AG04449 (cell line): ENCODE measurements at regions of chr3 and their contacts with region 1.

Region 1: DNA sequence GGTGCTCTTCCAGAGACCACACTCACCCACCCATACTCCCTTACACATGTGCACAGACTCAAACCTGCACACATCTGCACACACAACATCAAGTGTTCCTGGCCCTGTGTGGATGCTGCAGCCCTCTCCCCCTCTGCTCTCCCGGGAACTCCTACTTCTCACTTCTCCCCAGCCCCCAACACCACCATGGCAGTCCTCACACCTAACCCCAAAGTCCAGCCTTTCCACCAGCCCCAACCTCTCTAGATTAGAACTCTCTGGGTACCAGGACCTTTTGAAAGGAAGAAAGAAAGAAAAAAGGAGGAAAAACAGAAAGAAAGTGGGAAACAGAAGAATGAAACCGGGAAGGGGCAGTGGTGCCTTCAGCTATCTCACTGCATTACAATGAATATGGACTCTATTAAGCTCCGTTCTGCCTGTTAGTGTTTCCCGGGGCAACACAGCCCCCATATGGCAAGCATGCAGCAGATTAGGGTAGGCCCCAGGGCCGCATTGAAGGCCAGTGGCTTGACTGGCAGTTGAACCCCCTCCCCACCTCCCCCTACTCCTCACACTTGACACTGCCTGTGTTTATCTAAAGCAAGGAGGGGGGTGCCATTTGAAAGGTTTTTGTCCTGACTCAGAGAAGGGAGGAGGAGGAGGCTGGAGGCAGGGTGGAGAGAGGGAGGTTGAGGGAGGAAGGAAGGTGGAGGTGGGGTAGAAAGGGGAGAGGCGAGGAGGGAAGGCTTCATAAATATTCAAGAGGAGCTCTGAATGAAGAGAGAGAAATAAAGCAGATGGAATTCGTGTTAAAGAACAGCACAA is 30.1 kb downstream of the BOC start:
- DNase-seq: no peak
- H3K4me3 ChIP-seq: peak overlapping the region; percentile 46
- CTCF ChIP-seq: no peak

Region 2: DNA sequence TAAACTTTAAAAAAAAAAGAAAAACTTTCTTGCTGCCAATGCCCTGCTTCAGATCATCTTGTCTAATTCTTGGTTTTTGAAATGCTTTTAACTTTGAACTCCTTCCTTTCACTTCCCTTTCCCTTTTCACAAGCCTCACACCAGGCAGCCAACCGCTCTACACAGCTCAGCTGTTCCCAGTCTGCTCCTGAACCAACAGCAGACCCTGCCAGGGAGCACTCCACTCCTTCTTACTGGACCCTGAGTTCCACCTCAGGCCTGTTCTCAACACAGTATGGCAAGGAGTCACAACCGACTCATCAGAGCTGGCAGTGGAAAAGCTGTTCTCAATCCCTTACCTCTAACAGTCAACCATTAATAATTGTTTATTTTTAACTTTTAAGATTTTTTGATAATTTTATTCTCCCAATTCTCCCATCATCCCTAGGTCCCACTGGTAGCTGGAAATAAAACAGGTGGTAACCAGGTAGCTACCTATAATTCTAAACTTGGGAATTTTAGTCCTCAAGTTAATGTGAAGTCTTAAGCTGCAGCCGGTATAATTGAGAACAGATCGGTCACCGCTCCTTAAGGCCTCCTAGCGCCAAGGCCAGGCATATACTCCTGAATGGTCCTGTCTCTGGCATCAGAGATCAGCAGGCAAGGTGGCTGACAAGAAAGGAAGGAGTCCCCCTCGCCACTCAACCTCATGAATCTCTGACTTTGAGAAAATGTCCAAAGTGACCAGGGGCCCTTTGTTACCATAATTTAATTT is 13.8 kb after region 1 on chr3:
- CTCF ChIA-PET with region 1: interaction called, 12 read pairs
- POLR2A ChIA-PET with region 1: no interaction called
- DNase-seq: no peak
- H3K4me3 ChIP-seq: no peak overlapping the region
- CTCF ChIP-seq: peak; percentile 7

Region 3: GRCh38 chr3:113339616-113340244 is 98.2 kb after region 1 on chr3:
- CTCF ChIA-PET with region 1: no interaction called
- POLR2A ChIA-PET with region 1: no interaction called
- DNase-seq: no peak
- H3K4me3 ChIP-seq: no peak overlapping the region
- CTCF ChIP-seq: no peak

Region 4: DNA sequence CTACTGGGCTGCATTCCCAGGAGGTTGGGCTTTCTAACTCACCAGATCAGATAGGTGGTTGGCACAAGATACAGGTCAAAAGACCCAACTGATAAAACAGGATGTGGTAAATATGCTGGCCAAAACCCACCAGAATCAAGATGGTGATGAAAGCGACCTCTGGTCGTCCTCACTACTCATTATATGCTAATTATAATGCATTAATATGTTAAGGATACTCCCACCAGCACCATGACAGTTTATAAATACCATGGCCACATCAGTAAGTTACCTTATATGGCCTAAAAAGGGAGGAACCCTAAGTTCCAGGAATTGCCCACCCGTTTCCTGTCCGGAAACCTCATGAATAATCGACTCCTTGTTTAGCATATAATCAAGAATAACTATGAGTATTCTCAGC is 168.2 kb after region 1 on chr3:
- CTCF ChIA-PET with region 1: no interaction called
- POLR2A ChIA-PET with region 1: no interaction called
- DNase-seq: no peak
- H3K4me3 ChIP-seq: no peak overlapping the region
- CTCF ChIP-seq: no peak